ENCODE measurements at regions of chr2 and their contacts with region 1.

Region 1: DNA sequence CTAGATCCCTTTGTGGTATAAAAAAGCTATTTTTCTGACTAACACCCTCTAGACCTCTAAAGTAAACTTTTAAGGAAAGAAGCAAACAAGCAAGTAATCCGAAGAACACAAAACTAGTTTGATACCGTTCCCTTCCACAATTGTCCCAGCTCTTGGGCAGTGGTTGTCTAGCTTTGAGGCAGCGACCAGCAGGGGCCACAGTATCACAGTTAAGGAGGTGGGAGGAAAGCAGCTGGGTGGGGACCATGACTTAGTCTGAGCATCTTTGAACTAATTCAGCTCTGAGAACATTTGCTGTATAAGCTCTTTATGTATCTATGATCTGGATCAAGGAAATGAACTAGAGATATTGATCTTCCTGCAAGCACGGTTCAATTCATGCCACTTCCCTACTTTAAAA is 51.0 kb downstream of the SF3B1 start:
- DNase-seq: no peak
- ATAC-seq: no peak
- H3K4me3 ChIP-seq: no peak overlapping the region
- H3K27ac ChIP-seq: no peak overlapping the region
- H3K4me1 ChIP-seq: no peaks in the 10 kb centered on the region
- H3K27me3 ChIP-seq: no peaks in the 10 kb centered on the region
- CTCF ChIP-seq: no peak

Region 2: DNA sequence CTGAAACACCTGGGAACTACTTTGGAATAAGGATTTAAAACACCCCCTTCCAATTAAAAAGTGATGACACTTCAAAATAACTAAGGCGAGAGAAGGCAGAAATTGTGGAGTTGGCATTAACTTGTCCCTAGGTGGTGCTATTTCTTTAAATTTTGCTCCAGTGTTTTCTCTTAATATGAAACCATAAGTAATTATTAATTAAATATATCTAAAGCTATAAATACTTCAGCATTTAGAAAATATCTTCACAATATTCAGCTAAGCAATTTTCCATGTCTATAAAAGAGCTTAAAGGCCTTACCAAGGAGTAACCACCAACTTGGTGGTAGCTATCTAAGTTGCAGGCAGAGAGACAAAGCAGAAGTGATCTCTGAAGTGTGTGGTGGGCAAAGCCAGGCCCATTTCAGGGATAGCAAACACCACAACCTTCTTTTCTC is 270.5 kb before region 1 on chr2:
- intact Hi-C with region 1: loop called in 2 of 3 experiments (anchors 10 kb)
- DNase-seq: no peak
- ATAC-seq: peak in 3 of 4 donors; percentile 54 to 73 (median 59)
- H3K4me3 ChIP-seq: no peak overlapping the region
- H3K27ac ChIP-seq: no peak overlapping the region
- H3K4me1 ChIP-seq: no peaks in the 10 kb centered on the region
- H3K27me3 ChIP-seq: no peaks in the 10 kb centered on the region
- CTCF ChIP-seq: peak in 3 of 4 donors; percentile 36 to 50 (median 45)

Region 3: GRCh38 chr2:197480165-197481036 is 96.6 kb after region 1 on chr2:
- intact Hi-C with region 1: no loop called
- DNase-seq: no peak
- ATAC-seq: no peak
- H3K4me3 ChIP-seq: no peak overlapping the region
- H3K27ac ChIP-seq: no peak overlapping the region
- H3K4me1 ChIP-seq: no peaks in the 10 kb centered on the region
- H3K27me3 ChIP-seq: no peaks in the 10 kb centered on the region
- CTCF ChIP-seq: no peak

Region 4: GRCh38 chr2:197705121-197705911 is 321.5 kb after region 1 on chr2 and contains the start of gene MARS2:
- intact Hi-C with region 1: no loop called
- DNase-seq: peak; percentile 88 to 98 (median 95)
- ATAC-seq: peak; percentile 93 to 97 (median 96)
- H3K4me3 ChIP-seq: peak within 1 kb of the TSS; percentile 66 to 95 (median 82)
- H3K27ac ChIP-seq: peak within 1 kb of the TSS; percentile 64 to 88 (median 78)
- H3K4me1 ChIP-seq: peaks cover 20 to 29% (median 28%) of the 10 kb centered on the region in 3 donors
- H3K27me3 ChIP-seq: no peaks in the 10 kb centered on the region
- CTCF ChIP-seq: no peak
- total RNA-seq, gene MARS2: 2.0 to 5.3 (median 4.0) TPM